Psoas muscle (tissue), 8 donors: ENCODE measurements at regions of chr1 and their contacts with region 1.

Region 1: GRCh38 chr1:16289963-16290362 is 53.0 kb upstream of the CPLANE2 start:
- DNase-seq: no peak
- ATAC-seq: no peak
- H3K4me3 ChIP-seq: no peak overlapping the region
- H3K27ac ChIP-seq: no peak overlapping the region
- H3K4me1 ChIP-seq: peaks cover 21% of the 10 kb centered on the region
- H3K27me3 ChIP-seq: no peaks in the 10 kb centered on the region
- CTCF ChIP-seq: no peak

Region 2: GRCh38 chr1:16324456-16324890 is 34.5 kb after region 1 on chr1:
- intact Hi-C with region 1: loop called in 1 of 2 experiments (anchors 5 kb)
- DNase-seq: peak in 1 of 2 donors; percentile 19
- ATAC-seq: peak; percentile 88 to 94 (median 92)
- H3K4me3 ChIP-seq: peak overlapping the region; percentile 37
- H3K27ac ChIP-seq: peak overlapping the region; percentile 62
- H3K4me1 ChIP-seq: peaks cover 41% of the 10 kb centered on the region
- H3K27me3 ChIP-seq: no peaks in the 10 kb centered on the region
- CTCF ChIP-seq: no peak